ENCODE measurements at regions of chr19 and their contacts with region 1.

Region 1: DNA sequence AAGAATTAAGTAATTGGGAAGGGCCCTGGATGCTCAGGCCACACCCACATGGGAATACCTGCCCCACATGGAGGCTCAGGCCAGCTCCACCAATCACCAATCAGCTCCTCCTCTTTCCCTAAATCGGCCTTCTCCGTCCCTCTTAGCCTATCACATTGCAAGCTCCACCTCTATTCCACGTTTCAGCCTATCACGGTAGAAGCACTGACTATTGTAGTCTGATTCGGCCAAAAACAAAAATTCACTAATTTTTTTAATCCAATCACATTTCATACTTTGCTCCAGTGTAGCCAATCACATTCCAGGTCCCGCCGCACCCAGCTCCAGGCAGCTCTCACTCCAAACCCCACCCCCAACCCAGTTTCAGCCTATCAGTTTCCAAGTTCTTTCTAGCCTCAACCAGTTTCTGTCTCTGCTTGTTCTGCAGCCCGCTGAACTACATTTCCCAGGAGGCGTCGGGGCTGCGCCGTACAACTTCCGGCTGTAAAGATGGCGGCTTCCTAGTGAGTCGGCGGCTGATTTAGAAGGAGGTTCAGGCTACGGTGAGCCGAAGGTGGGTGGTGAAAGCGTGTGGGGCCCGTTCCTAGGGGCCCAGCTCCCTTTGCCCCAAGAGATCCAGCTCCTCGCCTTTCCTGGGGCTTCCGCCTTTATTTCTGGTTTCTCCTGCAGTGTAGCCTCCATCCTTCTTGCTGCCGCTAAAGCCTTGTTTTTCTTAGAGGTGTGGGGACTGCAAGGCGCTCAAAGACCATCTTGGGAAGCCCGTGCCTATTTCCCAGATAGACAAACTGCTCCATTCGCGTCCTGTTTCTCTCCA is at the start of gene BABAM1:
- DNase-seq: peak; percentile 69 to 99 (median 99)
- ATAC-seq: peak; percentile 96
- H3K4me3 ChIP-seq: peak within 1 kb of the TSS; percentile 84
- H3K4me3 Mint-ChIP-seq: peak within 1 kb of the TSS; percentile 68 to 92 (median 84)
- H3K27ac ChIP-seq: peak within 1 kb of the TSS; percentile 76
- H3K27ac Mint-ChIP-seq: peak within 1 kb of the TSS; percentile 69 to 93 (median 82)
- H3K4me1 ChIP-seq: peaks cover 6 to 18% of the 10 kb centered on the region in 2 donors
- H3K4me1 Mint-ChIP-seq: peaks cover 8 to 30% (median 22%) of the 10 kb centered on the region in 7 donors
- H3K27me3 ChIP-seq: no peaks in the 10 kb centered on the region
- H3K27me3 Mint-ChIP-seq: peaks cover 0 to 2% (median 0%) of the 10 kb centered on the region in 5 donors
- total RNA-seq, gene BABAM1: 72.4 to 111 (median 95.6) TPM

Region 2: GRCh38 chr19:17205237-17206140 is 61.7 kb before region 1 on chr19:
- CTCF ChIA-PET with region 1: interaction called, 14 read pairs
- POLR2A ChIA-PET with region 1: interaction called, 5 read pairs
- intact Hi-C with region 1: no loop called
- DNase-seq: peak; percentile 41 to 68 (median 54)
- ATAC-seq: peak; percentile 82
- H3K4me3 ChIP-seq: no peak overlapping the region
- H3K4me3 Mint-ChIP-seq: no peak overlapping the region
- H3K27ac ChIP-seq: no peak overlapping the region
- H3K27ac Mint-ChIP-seq: peak overlapping the region in 1 of 9 donors; percentile 38
- H3K4me1 ChIP-seq: no peaks in the 10 kb centered on the region
- H3K4me1 Mint-ChIP-seq: peaks cover 0 to 16% (median 0%) of the 10 kb centered on the region in 7 donors
- H3K27me3 ChIP-seq: no peaks in the 10 kb centered on the region
- H3K27me3 Mint-ChIP-seq: no peaks in the 10 kb centered on the region

Region 3: GRCh38 chr19:17226002-17226933 is 40.9 kb before region 1 on chr19 and contains the start of gene OCEL1:
- CTCF ChIA-PET with region 1: no interaction called
- POLR2A ChIA-PET with region 1: interaction called, 6 read pairs
- intact Hi-C with region 1: loop called (anchors 1 kb)
- DNase-seq: peak; percentile 91 to 98 (median 97)
- ATAC-seq: peak; percentile 94
- H3K4me3 ChIP-seq: peak within 1 kb of the TSS; percentile 98
- H3K4me3 Mint-ChIP-seq: peak within 1 kb of the TSS; percentile 82 to 98 (median 94)
- H3K27ac ChIP-seq: peak within 1 kb of the TSS; percentile 81
- H3K27ac Mint-ChIP-seq: peak within 1 kb of the TSS; percentile 86 to 99 (median 97)
- H3K4me1 ChIP-seq: peaks cover 0 to 2% of the 10 kb centered on the region in 2 donors
- H3K4me1 Mint-ChIP-seq: peaks cover 3 to 8% (median 5%) of the 10 kb centered on the region in 7 donors
- H3K27me3 ChIP-seq: no peaks in the 10 kb centered on the region
- H3K27me3 Mint-ChIP-seq: no peaks in the 10 kb centered on the region
- total RNA-seq, gene OCEL1: 21.8 to 32.8 (median 29.8) TPM

Region 4: GRCh38 chr19:17245244-17245984 is 21.8 kb before region 1 on chr19 and contains the start of gene NR2F6:
- CTCF ChIA-PET with region 1: no interaction called
- POLR2A ChIA-PET with region 1: no interaction called
- intact Hi-C with region 1: loop called in 1 of 2 experiments (anchors 2 kb)
- DNase-seq: peak in 3 of 9 donors; percentile 18 to 38 (median 26)
- ATAC-seq: peak; percentile 28
- H3K4me3 ChIP-seq: peak within 1 kb of the TSS; percentile 55
- H3K4me3 Mint-ChIP-seq: peak within 1 kb of the TSS; percentile 71 to 95 (median 86)
- H3K27ac ChIP-seq: peak within 1 kb of the TSS; percentile 60
- H3K27ac Mint-ChIP-seq: peak within 1 kb of the TSS in 7 of 9 donors; percentile 31 to 86 (median 74)
- H3K4me1 ChIP-seq: peaks cover 0 to 11% of the 10 kb centered on the region in 2 donors
- H3K4me1 Mint-ChIP-seq: peaks cover 0 to 14% (median 5%) of the 10 kb centered on the region in 7 donors
- H3K27me3 ChIP-seq: no peaks in the 10 kb centered on the region
- H3K27me3 Mint-ChIP-seq: peaks cover 0 to 16% (median 0%) of the 10 kb centered on the region in 5 donors
- total RNA-seq, gene NR2F6: 2.2 to 7.8 (median 7.0) TPM

Region 5: GRCh38 chr19:17305517-17306284 is 38.5 kb after region 1 on chr19 and contains the start of gene MRPL34:
- CTCF ChIA-PET with region 1: interaction called, 5 read pairs
- POLR2A ChIA-PET with region 1: interaction called, 12 read pairs
- intact Hi-C with region 1: loop called (anchors 1 kb)
- DNase-seq: peak; percentile 81 to 96 (median 93)
- ATAC-seq: peak; percentile 65
- H3K4me3 ChIP-seq: peak within 1 kb of the TSS; percentile 93
- H3K4me3 Mint-ChIP-seq: peak within 1 kb of the TSS; percentile 82 to 94 (median 90)
- H3K27ac ChIP-seq: peak within 1 kb of the TSS; percentile 81
- H3K27ac Mint-ChIP-seq: peak within 1 kb of the TSS; percentile 82 to 93 (median 90)
- H3K4me1 ChIP-seq: peaks cover 22 to 32% of the 10 kb centered on the region in 2 donors
- H3K4me1 Mint-ChIP-seq: peaks cover 28 to 64% (median 57%) of the 10 kb centered on the region in 7 donors
- H3K27me3 ChIP-seq: no peaks in the 10 kb centered on the region
- H3K27me3 Mint-ChIP-seq: no peaks in the 10 kb centered on the region
- total RNA-seq, gene MRPL34: 37.0 to 76.0 (median 73.3) TPM

Region 6: DNA sequence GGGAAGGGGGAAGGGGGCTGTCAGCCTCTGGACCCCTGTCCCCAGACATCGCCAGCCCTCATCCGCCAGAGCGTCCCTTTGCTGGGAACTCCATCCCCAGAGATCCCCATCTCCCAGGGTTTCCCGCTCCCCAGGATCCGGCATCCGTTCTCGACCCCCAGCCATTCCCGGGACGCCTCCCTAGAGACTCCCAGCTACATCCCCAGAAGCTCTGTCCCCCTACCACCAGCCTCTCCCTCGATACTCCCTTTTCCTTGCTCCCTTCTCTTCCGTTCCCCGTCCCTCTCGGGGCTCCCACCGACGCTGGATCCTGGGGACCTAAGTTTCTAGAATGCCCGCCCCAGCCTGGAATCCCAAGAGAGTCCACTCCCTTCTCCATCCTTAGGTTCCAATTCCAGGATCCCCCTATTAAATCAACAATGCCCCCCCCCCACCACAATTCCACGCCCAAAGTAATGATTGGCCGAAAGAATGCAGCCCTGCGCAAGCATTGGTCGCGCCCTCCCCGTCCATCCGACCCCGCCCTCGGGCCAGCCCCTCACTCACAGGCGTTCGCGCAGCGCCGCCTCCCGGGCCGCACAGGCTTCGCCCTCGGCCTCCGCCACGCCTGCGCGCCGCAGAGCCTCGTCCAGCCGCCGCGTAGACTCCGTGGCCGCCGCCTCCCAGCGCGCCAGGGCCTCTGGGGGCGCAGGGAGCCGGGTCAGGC is 123.6 kb after region 1 on chr19:
- CTCF ChIA-PET with region 1: no interaction called
- POLR2A ChIA-PET with region 1: no interaction called
- intact Hi-C with region 1: loop called in 1 of 2 experiments (anchors 1 kb)
- DNase-seq: peak; percentile 77 to 93 (median 85)
- ATAC-seq: peak; percentile 100
- H3K4me3 ChIP-seq: peak overlapping the region; percentile 84
- H3K4me3 Mint-ChIP-seq: peak overlapping the region; percentile 85 to 98 (median 92)
- H3K27ac ChIP-seq: peak overlapping the region; percentile 2
- H3K27ac Mint-ChIP-seq: peak overlapping the region in 5 of 9 donors; percentile 28 to 92 (median 61)
- H3K4me1 ChIP-seq: peaks cover 15 to 18% of the 10 kb centered on the region in 2 donors
- H3K4me1 Mint-ChIP-seq: peaks cover 6 to 30% (median 20%) of the 10 kb centered on the region in 7 donors
- H3K27me3 ChIP-seq: no peaks in the 10 kb centered on the region
- H3K27me3 Mint-ChIP-seq: peaks cover 0 to 28% (median 0%) of the 10 kb centered on the region in 5 donors

Measured in naive thymus-derived CD4-positive, alpha-beta T cell (primary cell).